GM13977 (cell line): ENCODE measurements at regions of chr14 and their contacts with region 1.

Region 1: DNA sequence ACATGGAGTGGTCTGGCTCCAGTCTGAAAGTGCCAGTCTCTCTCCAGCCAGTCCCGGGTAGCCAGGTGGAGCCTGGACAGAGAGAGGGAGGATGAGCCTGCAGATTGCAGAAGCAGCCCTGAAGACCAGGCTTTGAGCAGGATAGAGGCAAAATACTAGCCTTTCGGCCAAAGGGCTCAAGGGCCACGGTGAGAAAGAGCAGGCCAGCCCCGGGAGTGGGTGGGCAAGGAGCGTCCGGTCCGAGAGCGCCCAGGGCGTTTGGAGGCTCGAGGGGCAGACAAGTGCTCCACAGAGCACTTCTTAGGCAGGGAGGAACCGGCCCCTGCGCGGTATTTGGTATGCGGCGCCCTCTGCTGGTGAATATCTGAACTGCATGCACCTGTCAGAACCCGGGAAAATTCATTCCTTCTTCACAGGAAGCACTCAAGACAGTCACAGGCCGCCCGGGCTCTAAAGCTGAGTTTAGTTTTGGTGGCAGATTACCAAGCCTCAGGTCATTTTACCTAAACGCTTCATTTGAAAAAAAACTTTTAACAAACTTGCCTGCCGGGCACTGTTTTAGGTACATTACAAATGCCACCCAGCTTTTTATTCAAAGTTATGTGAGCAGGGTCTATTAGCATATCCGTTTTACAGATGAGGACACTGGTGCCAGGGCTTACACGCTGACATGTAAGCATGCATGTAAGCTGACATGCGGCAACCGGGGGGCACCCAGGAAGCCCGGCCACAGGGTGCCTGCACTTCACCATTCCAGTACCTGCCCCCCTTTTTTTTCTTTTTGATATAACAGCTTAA is 21.0 kb upstream of the PSMC1 start:
- DNase-seq: peak; percentile 80
- CTCF ChIP-seq: peak; percentile 91

Region 2: GRCh38 chr14:89000007-89000942 is 1235.1 kb before region 1 on chr14:
- in situ Hi-C with region 1: loop called (anchors 25 kb)
- DNase-seq: no peak
- CTCF ChIP-seq: no peak

Region 3: DNA sequence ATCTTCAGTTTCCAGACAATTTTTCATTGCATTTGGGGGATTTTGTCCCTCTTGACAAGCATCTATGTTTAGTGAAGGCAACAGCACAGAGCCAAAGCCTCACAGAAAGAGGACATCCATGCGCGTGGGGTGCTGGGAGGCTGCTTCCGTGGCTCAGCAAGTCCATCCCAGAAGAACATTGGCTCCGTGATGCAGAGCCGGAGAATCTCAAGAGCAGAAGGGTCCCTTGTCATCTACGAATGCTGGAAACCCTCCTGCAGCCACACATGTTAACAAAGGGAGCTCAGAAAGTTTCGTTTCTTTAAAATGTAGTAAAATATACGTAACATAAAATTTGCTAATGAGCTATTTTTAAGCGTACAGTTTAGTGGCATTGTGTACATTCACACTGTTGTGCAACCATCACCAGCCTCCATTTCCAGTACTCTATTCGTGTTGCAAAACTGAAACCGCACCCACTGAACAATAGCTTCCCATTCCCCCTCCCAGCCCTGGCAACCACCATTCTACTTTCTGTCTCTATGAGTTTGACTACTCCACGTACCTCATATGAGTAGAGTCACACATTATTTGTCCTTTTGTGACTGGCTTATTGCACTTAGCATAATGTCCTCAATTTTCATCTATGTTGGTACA is 394.9 kb after region 1 on chr14:
- in situ Hi-C with region 1: no loop called
- DNase-seq: no peak
- CTCF ChIP-seq: no peak